ENCODE measurements at regions of chr15 and their contacts with region 1.

Region 1: DNA sequence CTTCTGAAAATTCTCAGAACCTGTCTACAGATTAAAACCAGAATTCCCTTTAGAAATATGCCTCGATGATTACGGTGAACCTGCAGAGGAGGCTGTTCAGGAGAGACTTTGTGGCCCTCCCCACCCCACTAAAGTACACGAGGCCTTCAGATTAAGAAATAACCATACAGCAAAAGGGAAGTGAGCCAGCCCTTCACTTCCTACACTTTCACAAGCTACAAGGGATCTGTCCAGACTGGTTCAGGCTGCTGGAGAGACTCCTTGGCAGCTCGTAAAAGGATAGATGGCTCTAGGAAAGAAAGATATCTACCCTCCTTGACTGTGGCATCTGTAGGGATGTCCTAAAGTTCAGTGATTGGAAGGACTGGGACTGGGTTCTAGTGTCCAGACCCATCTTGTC is 102.6 kb downstream of the ALDH1A2 start:
- DNase-seq: no peak
- ATAC-seq: no peak
- H3K4me3 ChIP-seq: no peak overlapping the region
- H3K27ac ChIP-seq: no peak overlapping the region
- H3K4me1 ChIP-seq: no peaks in the 10 kb centered on the region
- H3K27me3 ChIP-seq: no peaks in the 10 kb centered on the region
- CTCF ChIP-seq: no peak

Region 2: GRCh38 chr15:57198654-57199291 is 764.1 kb before region 1 on chr15:
- CTCF ChIA-PET with region 1: no interaction called
- POLR2A ChIA-PET with region 1: interaction called, 12 read pairs
- intact Hi-C with region 1: no loop called
- DNase-seq: peak; percentile 28
- ATAC-seq: no peak
- H3K4me3 ChIP-seq: no peak overlapping the region
- H3K27ac ChIP-seq: no peak overlapping the region
- H3K4me1 ChIP-seq: peaks cover 4% of the 10 kb centered on the region
- H3K27me3 ChIP-seq: no peaks in the 10 kb centered on the region
- CTCF ChIP-seq: no peak

Measured in PC-3 (cell line).